ENCODE measurements at regions of chr7 and their contacts with region 1.

Region 1: DNA sequence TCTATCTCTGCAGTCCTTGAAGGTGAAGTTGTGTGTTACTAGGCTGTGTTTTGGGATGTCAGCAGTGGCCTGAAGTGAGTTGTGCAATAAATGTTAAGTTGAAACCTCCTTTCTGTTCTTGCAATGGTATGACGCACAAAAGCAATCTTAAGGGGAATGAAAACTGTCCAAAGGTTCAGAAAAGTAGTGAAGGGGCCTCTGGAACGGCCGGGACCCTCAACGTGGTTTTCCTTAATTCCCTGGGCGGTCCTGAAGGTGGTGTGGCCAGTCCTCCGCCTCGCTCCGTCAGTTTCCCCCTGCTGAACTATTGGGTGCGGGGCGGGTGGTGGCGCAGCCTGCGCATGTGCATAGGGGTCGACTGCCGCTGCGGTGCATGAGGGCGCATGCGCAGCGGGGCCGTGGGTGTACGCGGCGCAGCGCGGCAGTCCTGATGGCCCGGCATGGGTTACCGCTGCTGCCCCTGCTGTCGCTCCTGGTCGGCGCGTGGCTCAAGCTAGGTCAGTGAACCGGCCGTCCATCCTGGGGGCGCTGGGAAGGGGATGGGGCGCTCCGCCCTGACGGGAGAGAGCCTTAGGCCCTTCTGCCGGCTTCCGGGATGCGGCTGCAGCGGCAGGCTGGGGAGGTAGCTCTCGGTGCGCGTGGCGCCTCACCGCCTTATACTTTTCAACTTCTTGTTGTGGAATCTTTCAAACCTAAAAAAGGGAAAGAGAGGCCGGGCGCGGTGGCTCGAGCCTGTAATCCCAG is at the start of gene SUMF2:
- DNase-seq: peak; percentile 88 to 93 (median 91)
- H3K4me3 ChIP-seq: peak within 1 kb of the TSS; percentile 77
- H3K4me3 Mint-ChIP-seq: peak within 1 kb of the TSS; percentile 89 to 98 (median 92)
- H3K27ac ChIP-seq: peak within 1 kb of the TSS; percentile 85
- H3K27ac Mint-ChIP-seq: peak within 1 kb of the TSS; percentile 87 to 99 (median 95)
- H3K4me1 ChIP-seq: peaks cover 15% of the 10 kb centered on the region
- H3K4me1 Mint-ChIP-seq: peaks cover 23 to 37% (median 26%) of the 10 kb centered on the region in 3 donors
- H3K27me3 ChIP-seq: no peaks in the 10 kb centered on the region
- H3K27me3 Mint-ChIP-seq: no peaks in the 10 kb centered on the region
- total RNA-seq, gene SUMF2: 140 TPM

Region 2: DNA sequence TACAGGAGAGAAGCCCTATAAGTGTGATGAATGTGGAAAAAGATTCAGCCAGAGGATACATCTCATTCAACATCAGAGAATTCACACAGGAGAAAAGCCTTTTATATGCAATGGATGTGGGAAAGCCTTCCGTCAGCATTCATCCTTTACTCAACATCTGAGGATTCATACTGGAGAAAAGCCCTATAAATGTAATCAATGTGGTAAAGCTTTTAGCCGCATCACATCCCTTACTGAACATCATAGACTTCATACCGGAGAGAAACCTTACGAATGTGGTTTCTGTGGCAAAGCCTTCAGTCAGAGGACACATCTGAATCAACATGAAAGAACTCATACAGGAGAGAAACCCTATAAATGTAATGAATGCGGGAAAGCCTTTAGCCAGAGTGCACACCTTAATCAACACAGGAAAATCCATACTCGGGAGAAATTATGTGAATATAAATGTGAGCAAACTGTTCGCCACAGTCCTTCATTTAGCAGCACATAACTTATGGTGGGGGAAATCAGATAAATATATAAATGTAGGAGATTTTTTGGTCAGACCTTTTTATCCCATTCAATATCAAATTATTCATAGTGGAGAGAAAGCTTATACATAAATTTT is 124.4 kb before region 1 on chr7:
- CTCF ChIA-PET with region 1: no interaction called
- POLR2A ChIA-PET with region 1: no interaction called
- DNase-seq: no peak
- H3K4me3 ChIP-seq: no peak overlapping the region
- H3K4me3 Mint-ChIP-seq: no peak overlapping the region
- H3K27ac ChIP-seq: no peak overlapping the region
- H3K27ac Mint-ChIP-seq: no peak overlapping the region
- H3K4me1 ChIP-seq: no peaks in the 10 kb centered on the region
- H3K4me1 Mint-ChIP-seq: no peaks in the 10 kb centered on the region
- H3K27me3 ChIP-seq: no peaks in the 10 kb centered on the region
- H3K27me3 Mint-ChIP-seq: peaks cover 0 to 4% of the 10 kb centered on the region in 2 donors

Region 3: GRCh38 chr7:56051339-56052191 is 12.5 kb before region 1 on chr7 and contains the starts of genes CCT6A and PSPH:
- CTCF ChIA-PET with region 1: interaction called, 23 read pairs
- POLR2A ChIA-PET with region 1: interaction called, 15 read pairs
- DNase-seq: peak; percentile 84 to 91 (median 89)
- H3K4me3 ChIP-seq: peak within 1 kb of the TSS; percentile 91
- H3K4me3 Mint-ChIP-seq: peak within 1 kb of the TSS; percentile 89 to 99 (median 94)
- H3K27ac ChIP-seq: peak within 1 kb of the TSS; percentile 74
- H3K27ac Mint-ChIP-seq: peak within 1 kb of the TSS; percentile 80 to 99 (median 95)
- H3K4me1 ChIP-seq: peaks cover 36% of the 10 kb centered on the region
- H3K4me1 Mint-ChIP-seq: peaks cover 29 to 54% (median 45%) of the 10 kb centered on the region in 3 donors
- H3K27me3 ChIP-seq: no peaks in the 10 kb centered on the region
- H3K27me3 Mint-ChIP-seq: no peaks in the 10 kb centered on the region
- total RNA-seq, gene CCT6A: 348 to 361 TPM
- total RNA-seq, gene PSPH: 26.7 TPM

Region 4: DNA sequence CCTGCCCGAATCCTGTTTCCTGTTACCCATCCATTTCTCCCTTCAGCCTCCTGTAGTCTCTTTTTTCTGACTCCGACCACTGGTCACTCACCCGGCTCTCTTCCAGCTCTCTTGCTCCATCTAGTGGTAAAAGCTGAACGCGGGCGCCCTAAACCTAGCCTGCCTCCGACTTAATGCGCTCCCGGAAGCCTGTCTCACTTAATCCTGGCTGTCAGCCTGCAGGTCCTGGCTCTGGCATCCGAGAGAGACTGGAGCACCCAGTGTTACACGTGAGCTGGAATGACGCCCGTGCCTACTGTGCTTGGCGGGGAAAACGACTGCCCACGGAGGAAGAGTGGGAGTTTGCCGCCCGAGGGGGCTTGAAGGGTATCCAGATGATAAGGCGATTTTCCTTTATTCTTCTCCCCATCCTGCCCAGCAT is 10.3 kb after region 1 on chr7:
- CTCF ChIA-PET with region 1: interaction called, 28 read pairs
- POLR2A ChIA-PET with region 1: no interaction called
- DNase-seq: peak; percentile 44 to 72 (median 52)
- H3K4me3 ChIP-seq: no peak overlapping the region
- H3K4me3 Mint-ChIP-seq: peak overlapping the region in 1 of 7 donors; percentile 3
- H3K27ac ChIP-seq: no peak overlapping the region
- H3K27ac Mint-ChIP-seq: peak overlapping the region in 3 of 8 donors; percentile 28 to 29 (median 29)
- H3K4me1 ChIP-seq: no peaks in the 10 kb centered on the region
- H3K4me1 Mint-ChIP-seq: peaks cover 5 to 8% (median 8%) of the 10 kb centered on the region in 3 donors
- H3K27me3 ChIP-seq: no peaks in the 10 kb centered on the region
- H3K27me3 Mint-ChIP-seq: no peaks in the 10 kb centered on the region

Region 5: DNA sequence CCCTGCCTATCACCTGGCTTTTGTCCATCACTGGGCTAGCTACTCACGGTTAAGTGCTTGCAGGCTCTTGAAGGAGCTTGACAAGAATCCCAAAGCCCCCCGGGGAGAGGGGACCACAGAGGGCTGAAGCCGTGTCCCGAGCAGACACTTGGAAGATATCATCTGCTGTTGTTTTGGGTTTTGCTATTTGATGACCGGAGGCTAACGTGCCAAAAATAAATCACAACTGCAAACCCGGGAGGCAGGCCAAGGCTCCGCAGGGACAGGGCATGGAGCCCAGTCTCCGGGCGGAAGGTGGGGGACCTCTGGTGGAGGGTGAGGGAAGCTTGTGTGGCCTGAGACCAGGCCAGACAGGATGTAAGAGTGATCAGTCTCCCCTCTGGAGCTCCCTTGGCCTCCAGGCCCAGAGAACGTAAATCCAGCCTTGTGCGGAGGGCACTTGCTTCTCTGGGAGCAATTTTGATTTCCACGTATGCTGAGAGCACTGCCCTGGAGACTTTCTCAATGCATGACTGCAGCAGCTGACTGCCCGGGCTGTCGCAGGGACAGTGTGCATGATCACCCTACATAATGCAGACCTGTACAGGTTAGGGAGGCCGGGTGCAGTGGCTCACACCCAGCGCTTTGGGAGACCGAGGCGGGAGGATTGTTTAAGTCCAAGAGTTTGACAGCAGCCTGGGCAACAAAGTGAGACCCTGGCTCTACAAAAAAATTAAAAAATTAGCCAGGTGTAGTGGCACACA is 28.9 kb after region 1 on chr7 and contains the start of gene PHKG1:
- CTCF ChIA-PET with region 1: interaction called, 3 read pairs
- POLR2A ChIA-PET with region 1: interaction called, 12 read pairs
- DNase-seq: no peak
- H3K4me3 ChIP-seq: no peak within 1 kb of the TSS
- H3K4me3 Mint-ChIP-seq: no peak within 1 kb of the TSS
- H3K27ac ChIP-seq: no peak within 1 kb of the TSS
- H3K27ac Mint-ChIP-seq: peak within 1 kb of the TSS in 4 of 8 donors; percentile 11 to 83 (median 46)
- H3K4me1 ChIP-seq: no peaks in the 10 kb centered on the region
- H3K4me1 Mint-ChIP-seq: no peaks in the 10 kb centered on the region
- H3K27me3 ChIP-seq: no peaks in the 10 kb centered on the region
- H3K27me3 Mint-ChIP-seq: no peaks in the 10 kb centered on the region
- total RNA-seq, gene PHKG1: 1.2 TPM

Region 6: DNA sequence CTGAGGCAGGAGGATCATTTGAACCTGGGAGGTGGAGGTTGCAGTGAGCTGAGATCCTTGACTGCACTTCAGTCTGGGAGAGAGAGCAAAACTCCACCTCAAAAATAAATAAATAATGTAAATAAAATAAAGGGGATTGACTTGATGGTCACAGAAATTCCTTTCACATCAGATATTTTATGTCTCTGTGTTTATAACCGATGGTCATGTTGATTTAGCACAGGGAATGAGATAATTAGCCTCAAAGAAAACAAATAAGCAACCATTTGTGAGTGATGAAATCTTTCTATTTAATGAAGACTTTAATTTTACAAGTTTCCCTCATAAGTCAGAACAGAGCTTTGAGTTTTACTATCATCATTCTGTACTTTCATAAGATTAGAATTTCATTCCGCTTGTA is 116.9 kb after region 1 on chr7:
- CTCF ChIA-PET with region 1: no interaction called
- POLR2A ChIA-PET with region 1: no interaction called
- DNase-seq: no peak
- H3K4me3 ChIP-seq: no peak overlapping the region
- H3K4me3 Mint-ChIP-seq: no peak overlapping the region
- H3K27ac ChIP-seq: no peak overlapping the region
- H3K27ac Mint-ChIP-seq: no peak overlapping the region
- H3K4me1 ChIP-seq: no peaks in the 10 kb centered on the region
- H3K4me1 Mint-ChIP-seq: no peaks in the 10 kb centered on the region
- H3K27me3 ChIP-seq: no peaks in the 10 kb centered on the region
- H3K27me3 Mint-ChIP-seq: peaks cover 2 to 7% of the 10 kb centered on the region in 2 donors

Measured in CD8-positive, alpha-beta memory T cell (primary cell).